B cell (primary cell): ENCODE measurements at regions of chr12 and their contacts with region 1.

Region 1: GRCh38 chr12:103495479-103496456 is at the start of gene C12orf42:
- DNase-seq: peak; percentile 90
- ATAC-seq: peak; percentile 89
- H3K4me3 ChIP-seq: peak within 1 kb of the TSS in 4 of 5 experiments; percentile 46 to 77 (median 67)
- H3K4me3 Mint-ChIP-seq: peak within 1 kb of the TSS; percentile 83
- H3K27ac ChIP-seq: peak within 1 kb of the TSS in 1 of 2 donors; percentile 76
- H3K27ac Mint-ChIP-seq: peak within 1 kb of the TSS; percentile 83
- H3K4me1 ChIP-seq: peaks cover 16 to 18% of the 10 kb centered on the region in 2 donors
- H3K4me1 Mint-ChIP-seq: peaks cover 37% of the 10 kb centered on the region
- H3K27me3 ChIP-seq: no peaks in the 10 kb centered on the region
- H3K27me3 Mint-ChIP-seq: peaks cover 8% of the 10 kb centered on the region
- CTCF ChIP-seq: peak; percentile 66
- total RNA-seq, gene C12orf42: 136 and 138 TPM in 2 replicates

Region 2: DNA sequence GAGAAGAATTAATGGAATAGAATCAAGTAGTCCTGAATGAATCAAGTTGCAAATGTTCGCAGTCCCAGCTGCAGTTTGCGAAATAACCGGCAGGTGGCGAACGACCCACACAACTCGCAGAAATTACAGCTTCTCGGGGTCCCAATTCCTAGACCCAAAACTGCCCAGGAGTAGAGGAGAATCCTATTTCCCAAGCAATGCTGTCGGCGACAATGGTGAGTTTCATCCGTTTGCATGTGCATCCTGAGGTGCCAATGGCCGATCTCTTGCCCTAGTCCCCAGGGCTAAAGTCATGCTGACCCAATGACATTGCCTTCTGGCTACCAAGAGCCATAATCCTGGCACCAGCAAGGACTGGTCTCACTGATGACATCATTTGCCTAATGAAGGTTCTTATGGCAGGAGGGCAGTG is 546.8 kb before region 1 on chr12:
- CTCF ChIA-PET with region 1: interaction called, 86 read pairs
- POLR2A ChIA-PET with region 1: no interaction called
- intact Hi-C with region 1: loop called (anchors 2 kb)
- DNase-seq: peak; percentile 72
- ATAC-seq: peak; percentile 57
- H3K4me3 ChIP-seq: no peak overlapping the region
- H3K4me3 Mint-ChIP-seq: no peak overlapping the region
- H3K27ac ChIP-seq: no peak overlapping the region
- H3K27ac Mint-ChIP-seq: no peak overlapping the region
- H3K4me1 ChIP-seq: peaks cover 10 to 13% of the 10 kb centered on the region in 2 donors
- H3K4me1 Mint-ChIP-seq: peaks cover 9% of the 10 kb centered on the region
- H3K27me3 ChIP-seq: peaks cover 0 to 41% (median 24%) of the 10 kb centered on the region in 4 experiments
- H3K27me3 Mint-ChIP-seq: peaks cover 57% of the 10 kb centered on the region
- CTCF ChIP-seq: peak; percentile 99

Region 3: DNA sequence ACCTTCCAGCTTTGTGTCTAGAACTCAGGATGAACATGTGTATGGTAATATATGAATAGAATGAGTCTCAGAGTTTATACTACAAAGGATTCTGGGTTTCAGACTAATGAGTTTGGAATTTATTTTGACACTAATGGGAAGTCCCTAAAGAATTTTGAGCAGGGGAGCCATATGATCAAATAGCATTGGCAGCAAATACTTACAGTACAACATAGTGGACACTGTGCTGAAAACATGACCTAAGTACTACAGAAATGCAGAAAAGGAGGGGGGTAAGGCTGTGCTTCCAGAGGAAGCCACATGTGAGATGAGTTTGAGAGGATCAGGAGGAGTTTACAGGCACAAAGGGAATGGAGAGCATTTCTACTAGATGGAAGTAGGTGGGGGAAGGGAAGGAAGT is 225.8 kb before region 1 on chr12:
- CTCF ChIA-PET with region 1: no interaction called
- POLR2A ChIA-PET with region 1: no interaction called
- intact Hi-C with region 1: no loop called
- DNase-seq: no peak
- ATAC-seq: no peak
- H3K4me3 ChIP-seq: no peak overlapping the region
- H3K4me3 Mint-ChIP-seq: no peak overlapping the region
- H3K27ac ChIP-seq: no peak overlapping the region
- H3K27ac Mint-ChIP-seq: no peak overlapping the region
- H3K4me1 ChIP-seq: no peaks in the 10 kb centered on the region
- H3K4me1 Mint-ChIP-seq: peaks cover 6% of the 10 kb centered on the region
- H3K27me3 ChIP-seq: no peaks in the 10 kb centered on the region
- H3K27me3 Mint-ChIP-seq: no peaks in the 10 kb centered on the region
- CTCF ChIP-seq: no peak

Region 4: DNA sequence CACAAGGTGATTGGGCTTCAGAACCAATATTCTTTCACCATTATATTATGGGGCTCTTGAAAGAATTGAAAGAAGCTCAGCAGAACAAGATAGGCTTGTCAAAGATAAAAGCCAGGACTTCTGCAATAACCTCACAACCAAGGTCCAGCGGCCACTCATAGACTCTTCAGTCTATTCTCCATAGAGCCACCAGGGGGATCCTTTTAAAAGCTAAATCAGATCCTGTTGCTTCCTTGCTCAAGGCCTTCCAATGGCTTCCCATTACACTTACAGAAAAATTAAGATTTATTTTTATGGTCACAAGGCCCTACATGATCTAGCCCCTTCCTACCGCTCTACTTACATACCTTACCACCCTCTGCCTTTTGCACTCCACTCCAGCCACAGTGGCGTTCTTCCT is 169.6 kb before region 1 on chr12:
- CTCF ChIA-PET with region 1: interaction called, 29 read pairs
- POLR2A ChIA-PET with region 1: no interaction called
- intact Hi-C with region 1: loop called (anchors 2 kb)
- DNase-seq: peak; percentile 36
- ATAC-seq: no peak
- H3K4me3 ChIP-seq: no peak overlapping the region
- H3K4me3 Mint-ChIP-seq: no peak overlapping the region
- H3K27ac ChIP-seq: no peak overlapping the region
- H3K27ac Mint-ChIP-seq: no peak overlapping the region
- H3K4me1 ChIP-seq: no peaks in the 10 kb centered on the region
- H3K4me1 Mint-ChIP-seq: no peaks in the 10 kb centered on the region
- H3K27me3 ChIP-seq: no peaks in the 10 kb centered on the region
- H3K27me3 Mint-ChIP-seq: no peaks in the 10 kb centered on the region
- CTCF ChIP-seq: peak; percentile 53

Region 5: DNA sequence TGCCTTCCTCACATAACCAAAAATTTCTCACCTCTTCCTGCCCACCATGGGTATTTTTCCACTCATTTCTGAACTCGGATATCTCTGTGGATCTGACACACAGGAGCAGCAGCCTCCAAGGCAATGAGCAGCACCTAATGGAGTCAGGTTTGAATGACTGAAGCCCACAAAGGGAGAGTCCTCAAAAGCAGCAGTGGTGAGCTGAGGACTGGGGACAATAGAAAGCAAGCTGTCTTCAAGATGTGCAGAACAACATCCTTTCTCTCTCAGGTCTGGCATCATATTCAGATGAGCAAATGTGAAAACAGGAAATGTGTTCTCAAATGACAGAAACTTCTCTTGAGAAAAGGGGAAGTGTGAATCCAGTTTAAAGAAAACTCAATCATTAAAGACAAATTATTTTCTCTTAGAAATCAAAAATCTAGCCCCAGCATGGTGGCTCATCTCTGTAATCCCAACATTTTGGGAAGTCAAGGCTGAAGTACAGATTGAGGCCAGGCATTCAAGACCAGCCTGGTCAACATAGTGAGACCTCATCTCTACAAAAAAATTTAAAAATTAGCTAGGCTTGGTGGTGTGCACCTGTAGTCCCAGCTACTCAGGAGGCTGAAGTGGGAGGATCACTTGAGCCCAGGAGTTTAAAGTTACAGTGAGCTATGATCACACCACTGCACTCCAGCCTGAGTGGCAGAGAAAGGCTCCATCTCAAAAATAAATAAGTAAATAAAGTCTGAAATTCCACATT is 54.2 kb before region 1 on chr12:
- CTCF ChIA-PET with region 1: interaction called, 6 read pairs
- POLR2A ChIA-PET with region 1: interaction called, 33 read pairs
- intact Hi-C with region 1: loop called (anchors 1 kb)
- DNase-seq: peak; percentile 89
- ATAC-seq: peak; percentile 98
- H3K4me3 ChIP-seq: peak overlapping the region; percentile 46 to 97 (median 73)
- H3K4me3 Mint-ChIP-seq: peak overlapping the region; percentile 97
- H3K27ac ChIP-seq: peak overlapping the region; percentile 87 to 95
- H3K27ac Mint-ChIP-seq: peak overlapping the region; percentile 98
- H3K4me1 ChIP-seq: peaks cover 24% of the 10 kb centered on the region in 2 donors
- H3K4me1 Mint-ChIP-seq: peaks cover 28% of the 10 kb centered on the region
- H3K27me3 ChIP-seq: no peaks in the 10 kb centered on the region
- H3K27me3 Mint-ChIP-seq: no peaks in the 10 kb centered on the region
- CTCF ChIP-seq: no peak

Region 6: GRCh38 chr12:103530307-103531066 is 34.7 kb after region 1 on chr12:
- CTCF ChIA-PET with region 1: interaction called, 4 read pairs
- POLR2A ChIA-PET with region 1: interaction called, 20 read pairs
- intact Hi-C with region 1: no loop called
- DNase-seq: no peak
- ATAC-seq: no peak
- H3K4me3 ChIP-seq: no peak overlapping the region
- H3K4me3 Mint-ChIP-seq: peak overlapping the region; percentile 20
- H3K27ac ChIP-seq: no peak overlapping the region
- H3K27ac Mint-ChIP-seq: peak overlapping the region; percentile 50
- H3K4me1 ChIP-seq: peaks cover 0 to 3% of the 10 kb centered on the region in 2 donors
- H3K4me1 Mint-ChIP-seq: peaks cover 8% of the 10 kb centered on the region
- H3K27me3 ChIP-seq: no peaks in the 10 kb centered on the region
- H3K27me3 Mint-ChIP-seq: peaks cover 4% of the 10 kb centered on the region
- CTCF ChIP-seq: no peak